GM12878 (cell line): ENCODE measurements at regions of chrX and their contacts with region 1.

Region 1: DNA sequence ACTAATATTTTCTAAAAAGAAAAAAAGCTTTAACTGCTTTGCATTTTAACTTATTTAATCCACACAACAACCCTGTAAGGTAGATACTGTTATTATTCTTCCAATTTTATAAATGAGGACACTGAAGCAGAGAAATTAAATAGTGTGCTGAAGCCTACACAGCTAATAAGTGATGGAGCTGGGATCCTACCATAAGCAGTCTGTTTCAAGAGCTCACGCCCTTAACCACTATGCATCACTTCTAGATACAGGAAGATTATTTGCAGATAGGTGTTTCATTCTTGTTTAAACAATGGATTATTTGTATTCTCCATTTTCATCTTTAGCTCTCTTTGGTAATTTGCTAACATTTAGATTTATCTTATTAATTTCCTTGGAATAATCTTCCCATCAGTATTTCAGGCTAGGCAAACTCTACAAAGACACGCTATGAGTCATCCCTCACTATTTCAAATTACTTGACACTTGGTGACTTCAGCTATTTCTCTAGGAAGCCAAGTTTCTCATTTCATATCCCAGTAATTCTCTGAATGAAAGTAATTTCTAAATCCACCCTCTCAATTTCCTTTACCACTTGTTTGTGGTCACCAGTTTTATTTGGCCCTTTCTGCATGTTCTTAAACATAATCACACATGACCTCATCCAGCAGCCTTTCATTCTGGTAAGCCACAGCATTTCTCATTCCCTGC is 67.3 kb downstream of the ASB9 start:
- DNase-seq: peak; percentile 15
- ATAC-seq: peak; percentile 69
- H3K4me3 ChIP-seq: no peak overlapping the region
- H3K27ac ChIP-seq: no peak overlapping the region
- H3K4me1 ChIP-seq: 0 out of 2 replicates have a peak, but pooled peaks cover 5% of the 10 kb centered on the region
- H3K27me3 ChIP-seq: no peaks in the 10 kb centered on the region
- CTCF ChIP-seq: no peak
- EP300 ChIP-seq: peak in 1 of 2 experiments; percentile 69; a peak in 3 of 4 replicates
- POLR2A ChIP-seq: no peak
- RAD21 ChIP-seq: no peak

Region 2: GRCh38 chrX:14956813-14957582 is 245.6 kb before region 1 on chrX:
- CTCF ChIA-PET with region 1: no interaction called
- POLR2A ChIA-PET with region 1: no interaction called
- RAD21 ChIA-PET with region 1: no interaction called
- SMC1A ChIA-PET with region 1: no interaction called
- in situ Hi-C with region 1: no loop called
- intact Hi-C with region 1: no loop called
- DNase-seq: no peak
- ATAC-seq: no peak; the same call in 2 of the 3 replicates
- H3K4me3 ChIP-seq: no peak overlapping the region
- H3K27ac ChIP-seq: no peak overlapping the region
- H3K4me1 ChIP-seq: no peaks in the 10 kb centered on the region
- H3K27me3 ChIP-seq: no peaks in the 10 kb centered on the region
- CTCF ChIP-seq: no peak
- EP300 ChIP-seq: no peak
- POLR2A ChIP-seq: no peak
- RAD21 ChIP-seq: no peak

Region 3: DNA sequence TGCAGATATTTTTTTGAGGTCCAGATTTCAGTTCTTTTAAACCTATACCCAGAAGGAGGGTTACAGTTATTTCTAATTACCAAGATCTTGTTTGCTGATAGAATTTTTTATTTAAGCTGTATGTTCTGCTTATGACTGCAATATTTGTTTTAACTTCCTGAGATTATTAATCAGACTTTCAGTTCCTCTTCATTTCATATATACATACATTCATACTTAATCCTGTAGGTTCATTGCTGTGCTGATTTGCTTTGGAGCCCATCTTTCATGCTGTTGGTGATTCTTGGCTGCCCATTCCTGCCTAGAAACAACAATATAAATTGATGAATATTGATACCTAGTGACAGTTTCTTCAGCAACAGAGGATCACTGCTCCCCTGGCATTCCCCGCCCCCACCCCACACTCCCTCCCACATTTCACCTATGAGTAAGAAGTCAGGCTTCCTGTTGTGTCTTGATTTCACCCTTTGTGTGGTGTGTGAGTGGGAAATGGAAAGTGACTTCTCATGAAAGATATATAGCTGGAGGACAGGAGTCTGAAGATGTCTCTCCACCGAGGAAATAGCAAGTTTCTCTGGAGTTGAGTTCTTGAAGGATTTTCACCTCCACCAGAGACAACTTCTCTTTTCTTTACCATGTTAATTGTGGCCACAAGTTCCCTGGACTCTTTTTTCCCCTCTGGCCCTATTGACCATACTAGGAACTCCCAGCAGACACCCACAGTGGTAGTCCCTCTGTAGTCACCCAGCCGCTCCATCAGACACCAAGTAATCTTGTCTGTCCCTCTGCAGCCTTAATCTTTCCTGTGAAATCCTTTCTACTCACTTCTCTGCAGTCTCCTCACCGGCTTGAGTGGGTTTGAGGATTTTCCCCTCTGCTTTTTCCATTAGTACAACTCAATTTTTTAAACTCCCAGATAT is 51.1 kb before region 1 on chrX:
- CTCF ChIA-PET with region 1: interaction called, 3 read pairs
- POLR2A ChIA-PET with region 1: interaction called, 3 read pairs
- RAD21 ChIA-PET with region 1: interaction called, 8 read pairs
- SMC1A ChIA-PET with region 1: interaction called, 12 read pairs
- in situ Hi-C with region 1: no loop called
- intact Hi-C with region 1: loop called (anchors 2 kb)
- DNase-seq: peak; percentile 38
- ATAC-seq: peak; percentile 82
- H3K4me3 ChIP-seq: peak overlapping the region; percentile 5
- H3K27ac ChIP-seq: peak overlapping the region; percentile 67; the same call in 1 of the 2 replicates
- H3K4me1 ChIP-seq: peaks cover 5% of the 10 kb centered on the region; the same call in 1 of the 2 replicates
- H3K27me3 ChIP-seq: no peaks in the 10 kb centered on the region
- CTCF ChIP-seq: no peak
- EP300 ChIP-seq: peak in 1 of 2 experiments; percentile 78; a peak in 2 of 4 replicates
- POLR2A ChIP-seq: no peak
- RAD21 ChIP-seq: no peak

Region 4: GRCh38 chrX:15158736-15159406 is 43.7 kb before region 1 on chrX:
- CTCF ChIA-PET with region 1: no interaction called
- POLR2A ChIA-PET with region 1: interaction called, 5 read pairs
- RAD21 ChIA-PET with region 1: interaction called, 22 read pairs
- SMC1A ChIA-PET with region 1: interaction called, 12 read pairs
- in situ Hi-C with region 1: no loop called
- intact Hi-C with region 1: loop called (anchors 2 kb)
- DNase-seq: peak; percentile 33
- ATAC-seq: peak; percentile 75
- H3K4me3 ChIP-seq: peak overlapping the region; percentile 29
- H3K27ac ChIP-seq: peak overlapping the region; percentile 48; the same call in 1 of the 2 replicates
- H3K4me1 ChIP-seq: no peaks in the 10 kb centered on the region
- H3K27me3 ChIP-seq: no peaks in the 10 kb centered on the region
- CTCF ChIP-seq: no peak
- EP300 ChIP-seq: 0 out of 4 replicates have a peak, but pooled peaks of 1 of the 2 experiments have one; percentile 11
- POLR2A ChIP-seq: no peak
- RAD21 ChIP-seq: no peak

Region 5: DNA sequence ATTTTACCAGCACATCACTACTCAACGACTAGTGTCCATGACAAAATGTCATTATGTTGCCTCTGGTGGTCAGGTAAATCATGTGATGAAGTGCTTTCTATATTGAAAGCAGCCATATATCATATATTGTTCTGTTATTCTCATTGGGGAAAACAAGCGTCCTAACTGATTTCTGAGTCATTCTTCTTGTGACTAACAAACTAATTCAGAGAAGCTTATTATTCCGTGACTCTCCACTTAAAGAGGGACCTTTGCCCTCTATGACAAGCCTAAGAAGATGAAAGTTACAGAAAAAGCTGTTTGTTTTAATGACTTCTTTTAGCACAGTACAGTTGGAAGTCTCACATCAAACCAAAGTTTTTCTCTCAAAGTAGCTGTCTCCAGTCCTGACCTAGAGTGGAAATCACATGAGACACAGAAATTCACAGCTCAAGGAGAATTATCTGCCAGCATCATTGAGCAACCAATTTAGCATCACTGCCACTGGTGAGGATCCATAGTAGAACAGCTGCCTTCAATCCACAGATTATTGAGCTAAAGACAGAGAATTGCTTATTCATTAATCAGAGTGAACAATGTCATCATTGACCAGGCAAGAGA is 30.9 kb after region 1 on chrX:
- CTCF ChIA-PET with region 1: interaction called, 8 read pairs
- POLR2A ChIA-PET with region 1: interaction called, 4 read pairs
- RAD21 ChIA-PET with region 1: interaction called, 20 read pairs
- SMC1A ChIA-PET with region 1: interaction called, 11 read pairs
- in situ Hi-C with region 1: no loop called
- intact Hi-C with region 1: no loop called
- DNase-seq: no peak
- ATAC-seq: peak; percentile 78
- H3K4me3 ChIP-seq: no peak overlapping the region
- H3K27ac ChIP-seq: no peak overlapping the region
- H3K4me1 ChIP-seq: no peaks in the 10 kb centered on the region
- H3K27me3 ChIP-seq: no peaks in the 10 kb centered on the region
- CTCF ChIP-seq: no peak
- EP300 ChIP-seq: no peak
- POLR2A ChIP-seq: no peak
- RAD21 ChIP-seq: no peak

Region 6: DNA sequence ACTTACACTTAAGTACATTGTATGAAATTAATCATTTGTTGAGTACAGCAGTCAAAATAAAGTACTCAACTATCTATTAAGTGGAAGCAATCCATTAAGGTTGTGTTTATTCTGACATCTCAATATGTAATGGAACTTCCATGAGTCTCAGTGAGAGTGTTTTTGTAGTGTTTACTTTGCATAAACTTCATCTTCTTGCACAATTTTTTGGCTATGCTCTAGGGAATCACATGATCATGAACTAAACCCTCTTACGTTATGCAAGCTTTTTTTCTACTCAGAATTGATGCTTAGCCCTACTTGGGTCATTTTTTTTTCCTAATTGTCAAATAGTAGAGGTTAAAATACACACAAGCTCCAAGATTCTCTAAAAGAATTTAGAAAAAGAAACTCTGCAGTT is 153.8 kb after region 1 on chrX:
- CTCF ChIA-PET with region 1: no interaction called
- POLR2A ChIA-PET with region 1: no interaction called
- RAD21 ChIA-PET with region 1: no interaction called
- SMC1A ChIA-PET with region 1: no interaction called
- in situ Hi-C with region 1: no loop called
- intact Hi-C with region 1: no loop called
- DNase-seq: no peak
- ATAC-seq: no peak
- H3K4me3 ChIP-seq: no peak overlapping the region
- H3K27ac ChIP-seq: no peak overlapping the region
- H3K4me1 ChIP-seq: no peaks in the 10 kb centered on the region
- H3K27me3 ChIP-seq: no peaks in the 10 kb centered on the region
- CTCF ChIP-seq: no peak
- EP300 ChIP-seq: no peak
- POLR2A ChIP-seq: no peak
- RAD21 ChIP-seq: no peak